Caco-2 (cell line): ENCODE measurements at regions of chr22 and their contacts with region 1.

Region 1: GRCh38 chr22:36528795-36529751 is at the start of gene EIF3D:
- DNase-seq: peak; percentile 98 to 99
- H3K4me3 ChIP-seq: peak within 1 kb of the TSS; percentile 90
- H3K4me3 Mint-ChIP-seq: peak within 1 kb of the TSS; percentile 89
- H3K27ac Mint-ChIP-seq: peak within 1 kb of the TSS; percentile 93
- H3K4me1 ChIP-seq: peaks cover 7% of the 10 kb centered on the region; the same call in 1 of the 2 replicates
- H3K4me1 Mint-ChIP-seq: peaks cover 13% of the 10 kb centered on the region
- H3K27me3 ChIP-seq: no peaks in the 10 kb centered on the region
- H3K27me3 Mint-ChIP-seq: no peaks in the 10 kb centered on the region
- CTCF ChIP-seq: no peak
- total RNA-seq, gene EIF3D: 240 and 250 TPM in 2 replicates

Region 2: GRCh38 chr22:36481393-36482168 is 47.5 kb before region 1 on chr22 and contains the start of gene TXN2:
- CTCF ChIA-PET with region 1: no interaction called
- POLR2A ChIA-PET with region 1: interaction called, 10 read pairs
- intact Hi-C with region 1: no loop called
- DNase-seq: peak; percentile 96 to 97
- H3K4me3 ChIP-seq: peak within 1 kb of the TSS; percentile 84
- H3K4me3 Mint-ChIP-seq: peak within 1 kb of the TSS; percentile 91
- H3K27ac Mint-ChIP-seq: peak within 1 kb of the TSS; percentile 81
- H3K4me1 ChIP-seq: peaks cover 20% of the 10 kb centered on the region
- H3K4me1 Mint-ChIP-seq: peaks cover 17% of the 10 kb centered on the region
- H3K27me3 ChIP-seq: no peaks in the 10 kb centered on the region
- H3K27me3 Mint-ChIP-seq: no peaks in the 10 kb centered on the region
- CTCF ChIP-seq: no peak
- total RNA-seq, gene TXN2: 75.8 and 77.2 TPM in 2 replicates

Region 3: DNA sequence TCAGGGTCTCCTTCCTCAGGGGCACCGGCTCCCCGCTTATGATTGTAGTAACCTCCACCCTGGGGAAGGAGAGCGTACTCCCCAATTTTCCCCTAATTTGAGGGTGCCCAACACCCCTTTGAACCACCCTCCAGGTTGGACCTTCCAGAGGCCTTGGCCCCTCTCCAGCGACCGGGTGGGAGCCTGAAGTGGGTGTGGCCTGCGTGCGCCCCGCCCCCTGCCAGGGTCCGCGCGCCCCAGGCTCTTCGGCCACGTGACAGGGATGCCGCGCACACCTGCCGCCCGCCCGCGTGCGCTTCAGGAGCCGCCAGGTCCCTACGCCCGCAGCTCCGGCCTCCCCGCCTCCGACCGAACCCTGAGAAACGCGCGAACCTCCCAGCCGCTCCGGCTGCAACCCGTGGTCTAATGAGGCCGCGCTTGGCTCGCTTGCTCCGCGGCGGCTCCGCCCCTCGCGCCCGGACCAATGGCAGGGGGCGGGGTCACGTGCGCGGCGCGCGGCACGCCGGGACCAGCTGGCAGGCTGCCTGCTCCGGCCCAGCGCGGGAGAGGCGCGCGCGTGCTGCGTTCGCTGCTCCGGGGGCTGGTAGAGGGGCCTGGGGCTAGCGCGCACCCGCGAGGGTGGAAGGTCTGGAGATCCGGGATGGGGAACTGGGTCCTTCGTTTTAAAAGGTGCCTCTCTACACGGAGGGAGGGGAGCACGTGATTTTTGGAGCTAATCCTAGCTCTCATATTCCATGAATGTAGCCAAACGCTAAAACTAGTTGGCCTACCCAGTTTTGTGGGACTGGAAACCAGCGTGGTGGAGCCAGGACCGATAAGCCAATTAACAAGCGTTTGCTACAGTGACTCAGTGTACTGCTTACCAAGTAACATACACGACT is 22.2 kb before region 1 on chr22 and contains the start of gene FOXRED2:
- CTCF ChIA-PET with region 1: interaction called, 5 read pairs
- POLR2A ChIA-PET with region 1: interaction called, 12 read pairs
- intact Hi-C with region 1: loop called (anchors 1 kb)
- DNase-seq: peak; percentile 94 to 97
- H3K4me3 ChIP-seq: peak within 1 kb of the TSS; percentile 85
- H3K4me3 Mint-ChIP-seq: peak within 1 kb of the TSS; percentile 70
- H3K27ac Mint-ChIP-seq: peak within 1 kb of the TSS; percentile 78
- H3K4me1 ChIP-seq: peaks cover 22% of the 10 kb centered on the region
- H3K4me1 Mint-ChIP-seq: peaks cover 13% of the 10 kb centered on the region
- H3K27me3 ChIP-seq: no peaks in the 10 kb centered on the region
- H3K27me3 Mint-ChIP-seq: no peaks in the 10 kb centered on the region
- CTCF ChIP-seq: no peak
- total RNA-seq, gene FOXRED2: 182 and 220 TPM in 2 replicates

Region 4: DNA sequence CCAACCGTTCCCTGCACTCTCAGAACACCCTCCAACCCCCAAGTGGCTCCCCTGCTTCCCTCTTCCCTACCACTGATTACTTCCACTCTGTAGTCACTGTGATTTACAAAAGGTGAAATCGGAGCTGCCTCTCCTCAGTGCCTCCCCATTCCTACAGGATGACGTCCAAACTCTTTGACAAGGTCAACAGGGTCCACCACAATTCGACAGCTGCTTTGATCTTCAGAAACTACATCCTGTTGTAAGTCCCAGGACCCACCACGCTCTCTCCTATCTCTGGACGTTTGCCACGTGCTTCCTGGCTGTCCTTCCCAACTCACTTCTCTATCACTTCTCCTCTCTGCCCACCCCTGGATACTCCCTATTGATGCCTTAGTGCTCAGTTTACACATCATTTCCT is 84.9 kb after region 1 on chr22:
- CTCF ChIA-PET with region 1: no interaction called
- POLR2A ChIA-PET with region 1: no interaction called
- intact Hi-C with region 1: no loop called
- DNase-seq: no peak
- H3K4me3 ChIP-seq: no peak overlapping the region
- H3K4me3 Mint-ChIP-seq: no peak overlapping the region
- H3K27ac Mint-ChIP-seq: no peak overlapping the region
- H3K4me1 ChIP-seq: no peaks in the 10 kb centered on the region
- H3K4me1 Mint-ChIP-seq: no peaks in the 10 kb centered on the region
- H3K27me3 ChIP-seq: peaks cover 3% of the 10 kb centered on the region; the same call in 1 of the 2 replicates
- H3K27me3 Mint-ChIP-seq: peaks cover 33% of the 10 kb centered on the region
- CTCF ChIP-seq: no peak

Region 5: DNA sequence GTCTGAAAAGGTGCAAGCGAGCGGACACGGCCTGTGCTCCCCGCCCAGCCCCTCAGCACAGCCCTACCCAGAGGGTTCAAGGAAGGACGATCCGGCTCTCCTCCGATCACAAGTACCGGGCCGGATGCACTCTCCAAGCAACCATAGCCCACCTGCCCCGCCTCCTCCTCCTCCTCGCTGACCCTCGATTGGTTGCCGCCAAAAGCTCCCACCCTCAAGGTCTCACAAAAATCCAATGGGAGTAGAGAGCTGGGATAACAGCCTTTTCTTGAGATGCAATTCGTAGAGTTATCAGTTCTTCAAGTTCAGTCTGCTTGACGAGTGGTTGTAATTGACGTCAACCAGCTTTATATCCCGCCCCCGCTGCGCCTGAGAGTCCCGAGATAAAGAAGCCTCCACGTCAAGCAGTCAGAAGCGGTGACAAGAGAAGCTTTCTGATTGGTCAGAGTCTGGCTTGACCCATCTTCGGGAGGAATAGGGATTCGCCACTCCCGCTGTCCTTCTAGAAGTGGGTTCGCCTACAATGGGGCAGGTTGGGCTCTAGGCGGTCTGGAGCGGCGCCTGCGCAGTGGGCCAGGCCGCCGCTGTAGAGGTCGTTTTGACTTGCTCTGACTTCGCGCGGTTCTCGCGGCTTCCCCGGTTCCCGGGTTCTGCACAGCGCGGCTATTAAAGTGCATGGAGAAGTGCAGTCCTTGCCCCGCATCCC is 247.0 kb after region 1 on chr22 and contains the start of gene IFT27:
- CTCF ChIA-PET with region 1: interaction called, 3 read pairs
- POLR2A ChIA-PET with region 1: interaction called, 3 read pairs
- intact Hi-C with region 1: loop called (anchors 10 kb)
- DNase-seq: peak; percentile 97 to 99
- H3K4me3 ChIP-seq: peak within 1 kb of the TSS; percentile 68
- H3K4me3 Mint-ChIP-seq: peak within 1 kb of the TSS; percentile 81
- H3K27ac Mint-ChIP-seq: peak within 1 kb of the TSS; percentile 57
- H3K4me1 ChIP-seq: 0 out of 2 replicates have a peak, but pooled peaks cover 5% of the 10 kb centered on the region
- H3K4me1 Mint-ChIP-seq: peaks cover 5% of the 10 kb centered on the region
- H3K27me3 ChIP-seq: no peaks in the 10 kb centered on the region
- H3K27me3 Mint-ChIP-seq: peaks cover 4% of the 10 kb centered on the region
- CTCF ChIP-seq: no peak
- total RNA-seq, gene IFT27: 8.3 and 9.2 TPM in 2 replicates

Region 6: DNA sequence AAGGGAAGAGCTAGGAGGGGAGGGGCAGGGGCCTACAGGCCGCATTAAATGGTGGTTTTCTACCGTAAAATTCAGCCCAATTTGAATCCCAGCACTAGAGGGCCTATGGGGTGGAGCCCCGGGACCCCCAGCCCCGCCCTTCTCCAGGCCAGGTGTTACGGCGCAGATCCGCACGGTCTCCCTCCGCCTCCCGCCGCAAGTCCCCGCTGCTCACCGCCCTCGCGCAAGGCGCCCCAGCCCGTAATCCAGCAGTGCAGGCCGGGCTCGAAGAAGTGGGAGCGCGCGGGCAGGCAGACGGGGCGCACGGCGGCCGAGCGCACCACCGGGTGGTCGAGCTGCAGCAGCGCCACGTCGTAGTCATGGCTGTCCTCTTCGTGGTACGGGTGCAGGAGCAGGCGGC is 539.8 kb after region 1 on chr22:
- CTCF ChIA-PET with region 1: no interaction called
- POLR2A ChIA-PET with region 1: no interaction called
- intact Hi-C with region 1: no loop called
- DNase-seq: no peak
- H3K4me3 ChIP-seq: no peak overlapping the region
- H3K4me3 Mint-ChIP-seq: no peak overlapping the region
- H3K27ac Mint-ChIP-seq: no peak overlapping the region
- H3K4me1 ChIP-seq: peaks cover 6% of the 10 kb centered on the region; the same call in 1 of the 2 replicates
- H3K4me1 Mint-ChIP-seq: no peaks in the 10 kb centered on the region
- H3K27me3 ChIP-seq: no peaks in the 10 kb centered on the region
- H3K27me3 Mint-ChIP-seq: peaks cover 2% of the 10 kb centered on the region
- CTCF ChIP-seq: no peak